A673 (cell line): ENCODE measurements at regions of chr12 and their contacts with region 1.

Region 1: GRCh38 chr12:61993734-61994345 is 266.4 kb upstream of the USP15 start:
- DNase-seq: peak; percentile 84
- H3K4me3 ChIP-seq: no peak overlapping the region
- H3K27ac ChIP-seq: no peak overlapping the region
- H3K4me1 ChIP-seq: peaks cover 61% of the 10 kb centered on the region
- H3K27me3 ChIP-seq: no peaks in the 10 kb centered on the region
- CTCF ChIP-seq: peak; percentile 78

Region 2: DNA sequence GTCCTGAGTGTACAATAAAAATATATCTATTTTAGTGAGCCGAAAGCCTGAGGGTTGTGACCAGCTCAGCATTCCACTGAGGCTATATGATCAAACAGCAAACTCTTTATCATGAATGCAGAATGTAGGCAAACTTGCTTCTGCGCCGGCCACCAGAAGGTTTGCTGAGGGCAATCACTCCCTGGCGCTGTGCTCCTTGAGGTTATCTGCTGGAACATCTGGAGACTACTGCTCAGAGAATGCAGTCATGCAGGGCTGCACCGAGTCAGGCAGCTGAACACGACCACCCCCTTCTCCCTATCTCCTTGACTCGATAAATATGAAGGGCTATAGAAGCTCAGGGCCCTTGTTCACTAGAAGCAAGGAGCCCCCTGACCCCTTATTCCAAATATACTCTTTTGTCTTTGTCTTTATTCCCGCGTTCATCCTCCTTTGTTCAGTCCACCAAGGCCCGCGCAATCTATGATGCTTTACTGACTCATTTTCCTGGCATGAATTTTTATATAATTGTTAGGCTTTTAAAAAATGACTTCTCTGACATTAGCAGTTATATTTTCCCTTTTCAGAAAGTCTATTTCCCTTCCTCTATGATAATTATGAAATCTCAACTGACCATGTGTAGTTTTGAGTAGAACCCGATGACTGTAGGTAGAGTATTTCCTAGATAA is 1308.7 kb before region 1 on chr12:
- CTCF ChIA-PET with region 1: no interaction called
- POLR2A ChIA-PET with region 1: no interaction called
- intact Hi-C with region 1: loop called (anchors 10 kb)
- DNase-seq: peak; percentile 33
- H3K4me3 ChIP-seq: no peak overlapping the region
- H3K27ac ChIP-seq: no peak overlapping the region
- H3K4me1 ChIP-seq: no peaks in the 10 kb centered on the region
- H3K27me3 ChIP-seq: no peaks in the 10 kb centered on the region
- CTCF ChIP-seq: peak; percentile 55

Region 3: DNA sequence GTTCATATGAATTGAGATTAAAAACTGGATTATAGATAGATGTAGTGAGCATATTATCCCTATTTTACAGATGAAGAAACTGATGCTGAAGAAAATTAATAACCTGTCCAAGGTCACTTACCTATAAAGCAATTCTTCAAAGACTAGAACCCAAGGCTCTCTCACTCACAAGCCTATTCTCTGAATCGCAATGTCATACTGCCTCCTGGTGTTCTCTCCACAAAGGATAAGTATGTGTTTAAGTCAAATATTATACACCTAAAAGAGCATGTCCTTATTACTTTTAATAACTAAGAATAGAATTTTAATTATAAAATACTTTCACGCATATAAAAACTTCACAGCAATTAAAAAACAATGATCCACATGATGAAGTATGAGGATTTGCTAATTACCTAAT is 454.9 kb before region 1 on chr12:
- CTCF ChIA-PET with region 1: no interaction called
- POLR2A ChIA-PET with region 1: no interaction called
- intact Hi-C with region 1: no loop called
- DNase-seq: peak; percentile 35
- H3K4me3 ChIP-seq: no peak overlapping the region
- H3K27ac ChIP-seq: no peak overlapping the region
- H3K4me1 ChIP-seq: no peaks in the 10 kb centered on the region
- H3K27me3 ChIP-seq: no peaks in the 10 kb centered on the region
- CTCF ChIP-seq: peak; percentile 37; the same call in 1 of the 2 replicates

Region 4: DNA sequence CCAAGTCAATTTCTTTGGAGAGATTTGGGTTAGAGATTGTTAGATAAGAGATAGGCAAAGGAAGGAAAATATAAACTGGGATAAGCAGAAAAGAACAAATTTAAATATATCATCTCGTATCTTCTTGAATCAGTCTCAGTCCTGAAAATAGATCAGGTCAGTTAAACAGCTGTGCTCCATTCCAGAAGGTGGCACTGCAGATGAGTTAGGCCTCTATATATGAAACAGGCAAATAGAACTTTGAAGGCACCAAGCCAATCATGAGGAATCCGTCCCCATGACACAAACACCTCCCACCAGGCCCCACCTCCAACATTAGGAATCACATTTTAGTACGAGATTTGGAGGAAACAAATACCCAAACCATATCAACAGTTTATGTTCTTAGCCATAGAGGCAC is 339.1 kb before region 1 on chr12:
- CTCF ChIA-PET with region 1: no interaction called
- POLR2A ChIA-PET with region 1: no interaction called
- intact Hi-C with region 1: loop called (anchors 5 kb)
- DNase-seq: peak; percentile 52
- H3K4me3 ChIP-seq: no peak overlapping the region
- H3K27ac ChIP-seq: no peak overlapping the region
- H3K4me1 ChIP-seq: no peaks in the 10 kb centered on the region
- H3K27me3 ChIP-seq: no peaks in the 10 kb centered on the region
- CTCF ChIP-seq: peak; percentile 47

Region 5: DNA sequence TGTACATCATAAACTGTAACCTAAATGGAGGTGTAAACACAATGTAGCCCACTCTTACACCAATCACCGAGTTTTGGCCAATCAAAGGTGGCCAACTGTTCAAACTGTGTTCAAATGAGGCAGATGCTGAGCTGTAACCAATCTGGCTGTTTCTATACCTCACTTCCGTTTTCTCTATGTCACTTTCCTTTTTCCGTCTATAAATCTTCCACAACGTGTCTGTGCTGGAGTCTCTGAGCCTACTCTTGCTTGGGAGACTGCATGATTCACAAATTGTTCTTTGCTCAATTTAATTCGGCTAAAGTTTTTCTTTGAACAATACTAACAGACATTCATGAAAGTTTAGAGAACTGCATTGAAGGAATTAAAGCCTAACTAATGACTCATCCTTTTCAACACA is 280.7 kb before region 1 on chr12:
- CTCF ChIA-PET with region 1: no interaction called
- POLR2A ChIA-PET with region 1: no interaction called
- intact Hi-C with region 1: loop called (anchors 2 kb)
- DNase-seq: peak; percentile 66
- H3K4me3 ChIP-seq: no peak overlapping the region
- H3K27ac ChIP-seq: peak overlapping the region; percentile 17
- H3K4me1 ChIP-seq: peaks cover 23% of the 10 kb centered on the region
- H3K27me3 ChIP-seq: no peaks in the 10 kb centered on the region
- CTCF ChIP-seq: no peak

Region 6: GRCh38 chr12:62426089-62426488 is 432.2 kb after region 1 on chr12:
- CTCF ChIA-PET with region 1: no interaction called
- POLR2A ChIA-PET with region 1: no interaction called
- intact Hi-C with region 1: no loop called
- DNase-seq: no peak
- H3K4me3 ChIP-seq: no peak overlapping the region
- H3K27ac ChIP-seq: no peak overlapping the region
- H3K4me1 ChIP-seq: no peaks in the 10 kb centered on the region
- H3K27me3 ChIP-seq: no peaks in the 10 kb centered on the region
- CTCF ChIP-seq: no peak